Caco-2 (cell line): ENCODE measurements at regions of chr3 and their contacts with region 1.

Region 1: GRCh38 chr3:1082108-1082507 is 10.7 kb upstream of the CNTN6 start:
- DNase-seq: peak; percentile 44 to 60
- H3K4me3 ChIP-seq: no peak overlapping the region
- H3K4me3 Mint-ChIP-seq: no peak overlapping the region
- H3K27ac Mint-ChIP-seq: no peak overlapping the region
- H3K4me1 ChIP-seq: no peaks in the 10 kb centered on the region
- H3K4me1 Mint-ChIP-seq: no peaks in the 10 kb centered on the region
- H3K27me3 ChIP-seq: no peaks in the 10 kb centered on the region
- H3K27me3 Mint-ChIP-seq: no peaks in the 10 kb centered on the region
- CTCF ChIP-seq: peak; percentile 61 to 73

Region 2: DNA sequence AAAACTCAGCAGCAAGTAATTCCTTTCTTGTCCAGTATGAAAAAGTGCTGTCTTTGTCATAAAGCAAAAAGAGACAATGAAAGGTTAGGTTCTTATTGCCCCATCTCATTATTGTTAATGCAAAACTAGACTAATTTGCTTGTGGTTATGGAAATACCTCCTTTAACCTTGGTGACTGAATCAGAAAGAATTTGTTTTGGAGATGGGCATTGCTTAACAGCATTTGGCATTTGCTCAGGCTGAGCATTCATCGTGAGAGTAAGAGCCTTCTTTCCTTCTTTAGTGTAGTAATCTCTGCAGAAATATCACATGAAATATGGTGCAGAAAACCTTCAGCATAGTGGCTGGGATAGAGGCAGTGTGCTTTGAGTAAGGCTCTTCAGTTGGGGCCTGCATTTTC is 113.8 kb after region 1 on chr3:
- CTCF ChIA-PET with region 1: no interaction called
- POLR2A ChIA-PET with region 1: no interaction called
- intact Hi-C with region 1: no loop called
- DNase-seq: no peak
- H3K4me3 ChIP-seq: no peak overlapping the region
- H3K4me3 Mint-ChIP-seq: no peak overlapping the region
- H3K27ac Mint-ChIP-seq: no peak overlapping the region
- H3K4me1 ChIP-seq: no peaks in the 10 kb centered on the region
- H3K4me1 Mint-ChIP-seq: no peaks in the 10 kb centered on the region
- H3K27me3 ChIP-seq: no peaks in the 10 kb centered on the region
- H3K27me3 Mint-ChIP-seq: no peaks in the 10 kb centered on the region
- CTCF ChIP-seq: no peak

Region 3: DNA sequence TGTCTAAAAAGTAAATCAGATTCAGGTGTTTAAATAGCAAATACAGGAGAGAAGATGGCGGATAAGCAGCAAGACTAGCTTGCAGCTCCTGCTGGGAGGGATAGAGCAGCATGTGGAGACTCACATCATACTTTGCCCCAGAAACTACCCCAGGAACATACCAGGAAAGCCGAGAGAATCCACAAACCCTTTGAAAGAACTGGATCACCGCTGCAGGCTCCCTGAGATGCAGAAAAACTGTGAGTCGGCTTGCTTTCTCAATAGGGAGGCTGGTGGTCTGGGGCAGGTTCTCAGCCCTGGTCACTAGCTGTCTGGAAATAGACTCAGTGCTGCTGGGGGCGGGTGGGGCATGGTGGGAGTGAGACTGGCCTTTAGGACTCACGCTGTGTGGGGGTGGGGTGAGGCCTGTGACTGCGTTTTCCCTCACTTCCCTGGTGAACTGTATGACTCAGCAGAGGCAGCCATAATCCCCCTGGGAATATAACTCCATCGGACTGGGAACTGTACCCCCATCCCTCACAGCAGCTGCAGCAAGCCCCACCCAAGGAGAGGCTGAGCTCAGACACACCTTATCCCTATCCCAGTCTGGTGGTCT is 153.5 kb after region 1 on chr3:
- CTCF ChIA-PET with region 1: no interaction called
- POLR2A ChIA-PET with region 1: no interaction called
- intact Hi-C with region 1: loop called (anchors 5 kb)
- DNase-seq: no peak
- H3K4me3 ChIP-seq: no peak overlapping the region
- H3K4me3 Mint-ChIP-seq: no peak overlapping the region
- H3K27ac Mint-ChIP-seq: no peak overlapping the region
- H3K4me1 ChIP-seq: no peaks in the 10 kb centered on the region
- H3K4me1 Mint-ChIP-seq: no peaks in the 10 kb centered on the region
- H3K27me3 ChIP-seq: no peaks in the 10 kb centered on the region
- H3K27me3 Mint-ChIP-seq: peaks cover 3% of the 10 kb centered on the region
- CTCF ChIP-seq: no peak

Region 4: DNA sequence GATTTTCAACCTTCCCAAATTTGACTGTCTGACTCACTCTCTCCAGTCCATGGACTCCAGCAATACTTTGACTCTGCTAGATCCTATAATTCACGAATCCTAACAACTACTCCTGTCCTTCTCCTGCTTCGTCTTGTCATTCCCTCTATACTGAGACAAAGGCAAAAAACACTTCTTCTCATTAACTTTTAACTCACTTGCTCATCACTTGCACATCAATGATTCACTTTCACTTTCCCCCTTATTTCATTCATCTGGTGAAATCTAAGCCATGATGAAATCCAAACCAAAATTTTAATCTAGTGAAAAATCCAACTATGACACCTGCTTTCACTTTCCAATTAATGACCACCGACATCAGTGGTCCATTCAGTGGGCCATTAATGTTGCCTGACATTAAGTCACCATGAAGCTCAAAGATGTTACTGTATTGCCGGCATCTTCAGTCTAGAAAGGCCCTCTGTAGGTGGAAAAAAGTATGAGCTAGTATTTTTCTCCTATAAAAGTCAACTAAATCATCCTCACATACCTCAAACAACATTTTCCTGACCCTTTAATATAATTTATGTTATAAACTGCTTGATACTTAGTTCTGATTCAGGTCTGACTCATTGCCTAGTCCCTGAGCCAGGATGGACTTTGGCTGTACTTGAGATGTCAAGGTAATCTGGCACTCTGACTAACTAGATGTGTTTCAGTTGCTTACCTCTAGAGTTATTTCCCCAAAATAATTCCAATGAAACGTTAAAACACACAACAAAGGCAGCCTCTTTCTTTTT is 169.4 kb after region 1 on chr3:
- CTCF ChIA-PET with region 1: interaction called, 3 read pairs
- POLR2A ChIA-PET with region 1: no interaction called
- intact Hi-C with region 1: loop called (anchors 2 kb)
- DNase-seq: no peak
- H3K4me3 ChIP-seq: no peak overlapping the region
- H3K4me3 Mint-ChIP-seq: no peak overlapping the region
- H3K27ac Mint-ChIP-seq: no peak overlapping the region
- H3K4me1 ChIP-seq: no peaks in the 10 kb centered on the region
- H3K4me1 Mint-ChIP-seq: no peaks in the 10 kb centered on the region
- H3K27me3 ChIP-seq: no peaks in the 10 kb centered on the region
- H3K27me3 Mint-ChIP-seq: peaks cover 10% of the 10 kb centered on the region
- CTCF ChIP-seq: peak in 1 of 2 experiments; percentile 14